ENCODE measurements at regions of chr19 and their contacts with region 1.

Region 1: DNA sequence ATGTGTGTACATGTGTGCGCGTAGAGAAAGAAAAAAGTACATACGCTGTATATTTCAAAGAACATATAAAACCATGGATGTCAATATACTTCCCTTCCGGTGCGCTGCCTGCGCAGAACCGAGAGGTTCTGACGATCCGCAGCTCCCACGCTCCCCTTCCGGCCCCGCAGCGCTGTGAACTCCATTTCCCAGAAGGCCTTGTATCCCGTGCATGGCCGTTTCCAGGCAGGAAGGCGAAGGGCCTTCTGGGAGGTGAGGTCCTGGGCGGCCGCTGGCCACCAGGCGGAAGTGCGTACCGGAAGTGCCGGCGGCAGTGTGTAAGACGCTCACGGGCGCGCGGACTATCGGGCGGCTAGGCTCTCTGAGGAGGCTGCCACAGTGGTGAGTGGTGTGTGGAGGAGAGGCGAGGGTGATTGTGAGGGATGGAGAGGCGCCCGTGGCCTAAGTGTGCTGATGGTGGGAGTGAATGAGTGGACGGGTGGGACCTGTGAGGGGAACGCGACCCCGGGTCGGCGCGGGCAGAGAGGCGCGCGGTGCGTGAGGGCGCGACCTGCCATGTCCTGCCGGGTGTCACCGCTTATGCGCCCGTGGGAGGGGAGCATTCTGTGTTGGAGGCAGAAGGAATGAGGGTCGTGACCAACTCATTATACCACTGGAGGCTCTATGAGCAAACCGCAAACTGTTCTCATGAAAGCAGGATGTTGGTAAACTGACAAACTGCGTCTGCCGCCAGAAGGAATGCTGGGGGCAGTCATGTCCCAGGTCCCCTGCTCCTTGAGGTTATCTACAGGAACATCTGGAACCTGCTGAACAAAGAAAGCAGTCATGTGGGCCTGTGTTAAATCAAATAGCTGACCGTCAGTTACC is at the start of gene ERVK3-1:
- DNase-seq: peak; percentile 95
- H3K4me3 Mint-ChIP-seq: peak within 1 kb of the TSS; percentile 97
- H3K27ac Mint-ChIP-seq: peak within 1 kb of the TSS; percentile 96
- H3K4me1 Mint-ChIP-seq: peaks cover 43% of the 10 kb centered on the region
- H3K27me3 Mint-ChIP-seq: no peaks in the 10 kb centered on the region
- total RNA-seq, gene ERVK3-1: 87.1 and 96.7 TPM in 2 replicates

Region 2: GRCh38 chr19:57350877-57351805 is 954.2 kb before region 1 on chr19 and contains the start of gene ZNF304:
- intact Hi-C with region 1: no loop called
- DNase-seq: peak; percentile 84
- H3K4me3 Mint-ChIP-seq: peak within 1 kb of the TSS; percentile 92
- H3K27ac Mint-ChIP-seq: peak within 1 kb of the TSS; percentile 90
- H3K4me1 Mint-ChIP-seq: peaks cover 29% of the 10 kb centered on the region
- H3K27me3 Mint-ChIP-seq: no peaks in the 10 kb centered on the region
- total RNA-seq, gene ZNF304: 6.1 and 6.6 TPM in 2 replicates

Region 3: DNA sequence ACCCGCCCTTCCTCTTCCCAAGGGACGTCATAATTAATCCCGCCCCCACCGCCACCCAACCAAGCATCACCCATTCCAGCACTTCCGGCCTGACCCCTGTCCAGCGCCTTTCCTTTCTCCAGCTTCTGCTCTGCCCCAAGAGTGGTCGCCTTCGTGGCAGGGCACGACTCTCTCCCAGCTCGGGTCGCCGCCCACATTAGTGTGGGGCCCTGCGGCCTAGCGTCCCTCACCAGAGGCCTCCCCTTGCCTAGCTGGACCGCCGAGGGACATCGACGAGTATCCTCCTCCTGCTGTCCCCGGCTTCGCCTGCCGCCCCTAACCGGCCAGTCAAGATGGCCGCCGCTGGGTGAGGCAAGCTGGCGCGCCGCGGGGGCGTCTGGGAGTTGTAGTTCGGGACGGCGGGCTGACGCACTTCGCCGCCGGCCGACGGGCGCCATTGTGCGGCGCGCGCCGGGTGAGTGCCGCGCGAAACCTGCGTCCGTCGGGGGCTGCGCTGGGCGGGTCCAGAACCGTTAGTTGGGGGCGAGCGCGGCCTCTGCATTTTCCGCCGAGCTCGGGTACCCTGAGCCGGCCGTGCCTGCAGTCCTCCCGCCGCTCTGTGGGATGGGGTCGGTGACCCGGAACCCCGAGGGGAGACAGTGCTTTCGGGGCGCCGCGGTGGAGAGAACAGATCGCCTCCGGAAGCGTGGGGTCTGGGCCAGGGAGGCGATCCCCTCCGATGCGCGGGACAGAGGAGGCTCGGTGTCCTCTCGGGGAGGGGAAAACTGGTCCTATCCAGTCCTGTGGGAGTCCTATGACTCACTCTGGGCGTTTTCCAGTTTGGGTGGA is 122.1 kb before region 1 on chr19 and contains the start of gene ZNF274:
- intact Hi-C with region 1: loop called (anchors 1 kb)
- DNase-seq: peak; percentile 90
- H3K4me3 Mint-ChIP-seq: peak within 1 kb of the TSS; percentile 93
- H3K27ac Mint-ChIP-seq: peak within 1 kb of the TSS; percentile 99
- H3K4me1 Mint-ChIP-seq: peaks cover 16% of the 10 kb centered on the region
- H3K27me3 Mint-ChIP-seq: no peaks in the 10 kb centered on the region
- total RNA-seq, gene ZNF274: 18.2 and 21.2 TPM in 2 replicates

Region 4: DNA sequence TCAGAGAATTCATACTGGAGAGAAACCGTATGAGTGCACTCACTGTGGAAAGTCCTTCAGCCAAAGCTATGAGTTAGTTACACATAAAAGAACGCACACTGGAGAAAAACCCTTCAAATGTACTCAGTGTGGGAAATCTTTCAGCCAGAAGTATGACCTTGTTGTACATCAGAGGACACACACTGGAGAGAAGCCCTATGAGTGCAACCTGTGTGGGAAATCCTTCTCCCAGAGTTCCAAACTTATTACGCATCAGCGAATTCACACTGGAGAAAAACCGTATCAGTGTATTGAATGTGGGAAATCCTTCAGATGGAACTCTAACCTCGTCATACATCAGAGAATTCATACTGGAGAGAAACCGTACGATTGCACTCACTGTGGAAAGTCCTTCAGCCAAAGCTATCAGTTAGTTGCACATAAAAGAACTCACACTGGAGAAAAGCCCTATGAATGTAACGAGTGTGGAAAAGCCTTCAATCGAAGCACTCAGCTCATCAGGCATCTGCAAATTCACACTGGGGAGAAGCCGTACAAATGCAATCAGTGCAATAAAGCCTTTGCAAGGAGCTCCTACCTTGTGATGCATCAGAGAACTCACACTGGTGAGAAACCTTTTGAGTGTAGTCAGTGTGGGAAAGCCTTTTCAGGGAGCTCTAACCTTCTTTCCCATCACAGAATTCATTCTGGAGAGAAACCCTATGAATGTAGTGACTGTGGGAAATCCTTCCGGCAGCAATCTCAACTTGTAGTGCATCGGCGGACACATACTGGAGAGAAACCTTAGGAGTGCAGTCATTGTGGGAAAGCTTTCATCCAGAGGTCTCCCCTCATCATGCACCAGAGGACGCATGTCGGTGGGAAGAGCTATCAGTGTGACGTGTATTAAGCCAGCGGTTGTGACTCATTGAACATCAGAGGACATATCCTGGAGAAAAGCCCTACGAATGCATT is 43.1 kb before region 1 on chr19:
- intact Hi-C with region 1: no loop called
- DNase-seq: no peak
- H3K4me3 Mint-ChIP-seq: no peak overlapping the region
- H3K27ac Mint-ChIP-seq: no peak overlapping the region
- H3K4me1 Mint-ChIP-seq: no peaks in the 10 kb centered on the region
- H3K27me3 Mint-ChIP-seq: no peaks in the 10 kb centered on the region

Region 5: DNA sequence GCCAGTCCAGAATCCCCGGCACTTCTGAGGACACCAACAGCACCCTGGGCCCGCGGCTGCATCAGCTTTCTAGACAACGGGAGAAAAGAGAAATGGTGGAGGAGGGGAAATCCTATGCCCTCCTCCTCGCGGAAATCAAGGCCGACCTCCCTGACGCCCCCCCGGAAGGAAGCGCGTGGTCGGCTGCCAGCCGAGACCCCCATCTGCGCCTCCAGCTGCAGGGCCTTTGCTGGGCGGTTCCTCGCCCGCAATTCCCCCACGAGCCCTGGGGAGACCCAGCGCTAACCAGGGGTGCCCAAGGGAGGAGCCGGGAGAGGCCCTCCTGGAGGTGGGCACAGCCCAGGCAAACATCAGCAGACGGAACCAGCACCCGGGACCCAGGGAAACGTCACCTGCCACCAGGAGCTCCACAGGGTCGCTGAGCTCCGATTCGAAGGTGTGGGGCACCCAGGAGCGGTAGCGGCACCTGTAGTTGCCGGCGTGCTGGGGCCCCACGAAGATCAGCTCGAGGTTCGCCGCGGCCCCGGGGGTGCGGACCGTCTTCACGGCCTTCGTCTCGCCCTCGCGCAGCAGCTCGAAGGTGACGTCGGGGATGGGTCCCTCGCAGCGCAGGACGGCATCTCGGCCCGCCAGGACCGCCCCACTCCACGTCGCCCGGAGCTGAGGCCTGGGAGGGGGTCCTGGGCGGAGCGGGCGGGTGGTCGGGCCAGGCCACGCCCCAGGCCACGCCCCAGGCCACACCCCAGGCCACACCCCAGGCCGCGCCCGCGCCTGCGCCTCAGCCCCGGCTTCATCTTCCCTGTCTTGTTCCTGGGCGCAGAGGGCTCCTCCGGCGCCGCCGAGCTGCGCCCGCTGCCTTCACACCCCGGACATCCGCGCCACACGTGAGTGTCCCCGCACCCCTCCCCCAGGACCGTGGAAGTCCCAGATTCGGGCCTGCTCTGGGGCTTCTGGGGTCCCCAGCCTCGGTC is 41.9 kb after region 1 on chr19:
- intact Hi-C with region 1: loop called (anchors 1 kb)
- DNase-seq: peak; percentile 63
- H3K4me3 Mint-ChIP-seq: peak overlapping the region; percentile 92
- H3K27ac Mint-ChIP-seq: peak overlapping the region; percentile 83
- H3K4me1 Mint-ChIP-seq: peaks cover 29% of the 10 kb centered on the region
- H3K27me3 Mint-ChIP-seq: no peaks in the 10 kb centered on the region

Region 6: DNA sequence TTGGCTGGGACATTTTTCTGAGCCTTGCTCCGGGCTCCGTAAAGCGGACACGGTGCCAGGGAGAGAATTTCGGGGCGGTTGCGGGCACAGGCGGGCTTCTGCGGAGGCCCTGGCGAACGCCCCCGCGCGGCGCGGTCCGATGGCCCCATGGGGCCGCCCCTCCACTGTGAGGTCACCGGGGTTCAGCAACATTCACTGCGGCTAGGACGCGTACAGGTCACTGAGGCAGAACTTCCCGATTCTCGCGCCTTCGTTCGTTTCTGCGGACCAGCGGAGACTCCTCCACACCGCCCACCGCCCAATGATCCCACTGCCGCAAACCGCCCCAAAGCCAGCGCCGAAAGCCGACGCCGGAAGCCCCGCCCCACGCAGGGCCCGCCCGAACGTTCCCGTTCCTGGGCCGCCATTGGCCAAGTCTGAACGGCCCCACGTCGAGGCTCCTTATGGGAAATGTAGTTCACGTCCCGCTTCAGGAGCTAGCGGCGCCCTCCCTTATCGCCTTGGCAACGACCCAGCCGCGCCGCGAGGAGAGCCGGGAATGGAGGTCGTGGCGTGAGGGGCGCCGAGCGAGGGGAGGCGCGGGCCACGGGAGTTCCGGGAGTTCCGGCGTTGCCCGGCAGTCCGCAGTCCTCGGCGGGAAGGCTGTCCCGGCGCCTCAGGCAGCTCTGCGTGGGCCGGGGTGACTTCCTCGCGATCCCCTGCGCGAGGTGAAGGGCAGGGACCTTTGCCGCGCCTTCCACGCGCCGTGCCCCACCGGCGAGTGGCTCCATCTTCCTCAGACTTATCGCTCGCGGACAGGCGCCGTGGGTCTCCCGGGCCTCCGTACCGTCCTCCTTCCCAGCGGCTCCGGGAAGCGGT is 103.1 kb after region 1 on chr19 and contains the start of gene ZNF584:
- intact Hi-C with region 1: loop called (anchors 1 kb)
- DNase-seq: peak; percentile 90
- H3K4me3 Mint-ChIP-seq: peak within 1 kb of the TSS; percentile 84
- H3K27ac Mint-ChIP-seq: peak within 1 kb of the TSS; percentile 98
- H3K4me1 Mint-ChIP-seq: peaks cover 35% of the 10 kb centered on the region
- H3K27me3 Mint-ChIP-seq: no peaks in the 10 kb centered on the region
- total RNA-seq, gene ZNF584: 17.8 and 20.6 TPM in 2 replicates

Region 7: GRCh38 chr19:58475714-58476497 is 170.6 kb after region 1 on chr19 and contains the start of gene ZNF446:
- intact Hi-C with region 1: loop called (anchors 1 kb)
- DNase-seq: peak; percentile 95
- H3K4me3 Mint-ChIP-seq: peak within 1 kb of the TSS; percentile 88
- H3K27ac Mint-ChIP-seq: peak within 1 kb of the TSS; percentile 99
- H3K4me1 Mint-ChIP-seq: peaks cover 25% of the 10 kb centered on the region
- H3K27me3 Mint-ChIP-seq: no peaks in the 10 kb centered on the region
- total RNA-seq, gene ZNF446: 6.6 and 6.7 TPM in 2 replicates